Aorta (tissue), 5 donors: ENCODE measurements at regions of chr17 and their contacts with region 1.

Region 1: DNA sequence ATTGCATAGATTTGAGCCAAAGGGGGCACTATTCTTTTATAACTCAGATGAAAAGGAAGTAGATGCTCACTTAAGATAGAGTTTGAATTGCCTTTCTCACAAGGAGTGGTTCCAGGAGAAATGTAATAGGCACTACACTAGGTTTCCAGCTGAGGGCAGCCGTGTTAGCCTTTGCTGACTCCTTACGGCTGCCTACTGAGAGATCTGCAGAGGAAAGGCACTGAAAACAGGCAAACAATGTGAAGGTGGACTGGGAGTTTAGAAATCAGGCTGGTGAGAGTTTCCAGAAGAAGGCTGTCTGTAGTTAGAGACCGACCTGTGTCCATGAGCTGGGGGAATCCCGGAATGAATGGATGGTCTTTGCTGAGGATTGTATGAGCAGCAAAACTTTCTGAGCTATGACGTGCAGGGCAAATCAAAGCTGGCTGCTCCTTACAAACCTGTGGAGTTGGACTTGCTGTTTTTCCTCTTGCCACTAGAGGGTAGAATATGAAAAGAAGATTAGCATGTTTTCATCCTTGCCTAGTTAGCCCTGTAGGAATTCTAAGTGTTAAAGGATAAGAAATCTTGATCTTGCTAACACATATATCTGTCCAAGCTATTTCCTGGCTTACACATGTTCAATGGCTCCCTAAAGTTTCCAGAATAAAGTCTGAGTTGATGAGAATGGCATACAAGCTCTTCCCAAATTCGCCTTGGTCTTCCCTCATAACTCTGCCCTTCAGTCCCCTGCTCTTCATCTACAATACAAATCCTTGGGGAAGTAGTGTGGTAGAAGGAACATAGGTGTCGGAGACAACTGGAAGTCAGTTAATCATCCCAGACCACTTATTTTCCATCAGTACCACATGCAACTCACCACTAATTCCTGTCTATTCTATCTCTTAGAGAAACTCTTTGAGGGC is 20.1 kb upstream of the TAOK1 start:
- DNase-seq: peak in 1 of 2 donors; percentile 75
- ATAC-seq: peak; percentile 93
- H3K4me3 ChIP-seq: no peak overlapping the region
- H3K27ac ChIP-seq: peak overlapping the region in 1 of 2 donors; percentile 19
- H3K4me1 ChIP-seq: no peaks in the 10 kb centered on the region
- H3K27me3 ChIP-seq: no peaks in the 10 kb centered on the region

Region 2: DNA sequence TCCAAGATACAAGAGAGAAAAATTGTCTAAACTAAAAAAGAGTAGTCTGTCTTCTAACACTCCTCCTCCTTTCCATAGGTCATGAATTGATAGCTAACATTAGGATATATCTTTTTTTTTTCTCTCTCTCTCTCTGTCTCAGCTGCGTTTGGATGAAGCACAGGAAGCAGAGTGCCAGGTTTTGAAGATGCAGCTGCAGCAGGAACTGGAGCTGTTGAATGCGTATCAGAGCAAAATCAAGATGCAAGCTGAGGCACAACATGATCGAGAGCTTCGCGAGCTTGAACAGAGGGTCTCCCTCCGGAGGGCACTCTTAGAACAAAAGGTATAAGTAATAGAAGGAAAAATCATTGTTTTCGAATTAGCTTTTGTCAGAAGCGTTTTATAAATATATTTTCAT is 163.9 kb after region 1 on chr17:
- intact Hi-C with region 1: loop called (anchors 2 kb)
- DNase-seq: no peak
- ATAC-seq: no peak
- H3K4me3 ChIP-seq: no peak overlapping the region
- H3K27ac ChIP-seq: no peak overlapping the region
- H3K4me1 ChIP-seq: no peaks in the 10 kb centered on the region
- H3K27me3 ChIP-seq: no peaks in the 10 kb centered on the region